A549 (cell line): ENCODE measurements at regions of chr22 and their contacts with region 1.

Region 1: DNA sequence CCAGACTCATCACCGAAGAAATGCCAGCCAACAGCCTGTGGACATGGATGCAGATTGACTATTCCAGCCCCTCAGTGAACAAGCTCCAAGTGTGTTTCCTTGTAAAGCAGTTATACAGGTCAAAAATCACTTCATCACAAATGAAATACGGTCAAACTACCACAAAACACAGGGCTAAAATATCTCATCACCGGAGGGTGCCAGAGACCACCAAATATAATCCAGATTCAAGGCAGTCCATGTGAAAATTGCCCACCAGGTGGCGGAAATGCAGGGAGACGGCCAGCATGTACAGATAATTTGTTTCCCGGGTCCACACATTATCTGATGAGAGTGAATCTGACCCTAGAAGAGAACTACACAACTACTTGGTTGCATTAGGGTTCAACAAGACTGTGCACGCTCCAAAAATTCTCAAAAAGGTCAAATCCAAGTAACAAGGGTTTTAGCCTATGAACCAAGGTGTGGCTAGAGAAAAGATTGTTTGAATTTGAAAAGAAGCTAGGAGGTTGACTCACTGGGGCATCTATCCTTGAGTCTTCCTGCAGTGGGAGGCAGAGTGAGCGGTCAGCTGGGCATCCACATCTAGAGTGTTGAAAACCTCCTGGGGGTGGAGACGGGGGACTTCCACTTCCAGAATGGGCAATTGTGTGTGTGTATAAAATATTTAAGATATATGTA is 71.7 kb downstream of the IGLL5 start:
- DNase-seq: peak; percentile 40 to 66
- ATAC-seq: peak; percentile 71 to 84
- H3K4me3 ChIP-seq: no peak overlapping the region
- H3K27ac ChIP-seq: no peak overlapping the region
- H3K4me1 ChIP-seq: no peaks in the 10 kb centered on the region
- CTCF ChIP-seq: peak; percentile 93
- EP300 ChIP-seq: no peak
- POLR2A ChIP-seq: no peak
- RAD21 ChIP-seq: peak; percentile 90

Region 2: GRCh38 chr22:22591348-22592299 is 367.7 kb before region 1 on chr22:
- CTCF ChIA-PET with region 1: interaction called, 44 read pairs
- POLR2A ChIA-PET with region 1: no interaction called
- DNase-seq: peak in 1 of 2 experiments; percentile 4
- ATAC-seq: peak; percentile 58 to 63; a peak in 2 of 6 replicates
- H3K4me3 ChIP-seq: no peak overlapping the region
- H3K27ac ChIP-seq: no peak overlapping the region
- H3K4me1 ChIP-seq: no peaks in the 10 kb centered on the region
- CTCF ChIP-seq: no peak
- EP300 ChIP-seq: no peak
- POLR2A ChIP-seq: no peak
- RAD21 ChIP-seq: no peak

Region 3: DNA sequence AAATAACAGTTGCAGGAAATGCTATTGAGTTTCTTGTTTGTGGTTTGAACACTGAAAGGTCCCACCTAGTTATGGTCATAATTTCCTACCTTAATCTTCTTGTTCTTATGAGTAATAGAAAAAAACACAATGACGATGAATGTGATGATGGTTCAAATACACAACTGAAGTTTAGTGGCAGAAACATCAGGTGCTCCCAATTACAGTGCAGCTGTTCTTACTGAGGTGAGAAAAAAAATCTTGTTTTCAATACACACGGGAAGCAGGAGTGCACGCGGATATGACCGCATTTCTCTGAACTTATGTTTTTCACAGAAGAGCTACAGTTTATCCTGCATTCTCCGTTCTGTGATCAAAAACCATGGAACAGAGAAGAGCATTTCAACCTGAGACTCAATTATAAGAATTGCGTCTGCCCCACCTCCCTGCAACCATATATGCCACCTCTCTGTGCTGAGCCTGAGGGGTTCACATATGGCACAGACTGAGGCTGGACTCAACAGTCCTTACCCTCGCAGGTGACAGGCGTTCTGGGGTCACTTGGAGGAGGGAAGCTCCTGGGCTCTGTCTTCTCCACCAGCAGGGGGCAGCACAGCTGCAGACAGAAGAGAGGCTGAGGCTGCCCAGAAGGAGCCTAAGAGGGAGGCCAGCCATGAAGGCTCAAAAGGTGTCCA is 171.4 kb before region 1 on chr22:
- CTCF ChIA-PET with region 1: interaction called, 64 read pairs
- POLR2A ChIA-PET with region 1: no interaction called
- DNase-seq: peak; percentile 39 to 52
- ATAC-seq: peak; percentile 80 to 95; a peak in 5 of 6 replicates
- H3K4me3 ChIP-seq: no peak overlapping the region
- H3K27ac ChIP-seq: no peak overlapping the region
- H3K4me1 ChIP-seq: no peaks in the 10 kb centered on the region
- CTCF ChIP-seq: peak; percentile 58; the same call in 2 of the 3 replicates
- EP300 ChIP-seq: no peak
- POLR2A ChIP-seq: no peak
- RAD21 ChIP-seq: peak; percentile 30 to 46; a peak in 4 of 5 replicates

Region 4: GRCh38 chr22:22928666-22929380 is 30.5 kb before region 1 on chr22:
- CTCF ChIA-PET with region 1: interaction called, 22 read pairs
- POLR2A ChIA-PET with region 1: no interaction called
- DNase-seq: no peak
- ATAC-seq: peak in 1 of 2 experiments; percentile 57; a peak in 3 of 6 replicates
- H3K4me3 ChIP-seq: no peak overlapping the region
- H3K27ac ChIP-seq: no peak overlapping the region
- H3K4me1 ChIP-seq: no peaks in the 10 kb centered on the region
- CTCF ChIP-seq: no peak
- EP300 ChIP-seq: no peak
- POLR2A ChIP-seq: no peak
- RAD21 ChIP-seq: no peak

Region 5: GRCh38 chr22:23106906-23107367 is 147.7 kb after region 1 on chr22:
- CTCF ChIA-PET with region 1: interaction called, 19 read pairs
- POLR2A ChIA-PET with region 1: no interaction called
- DNase-seq: no peak
- ATAC-seq: no peak
- H3K4me3 ChIP-seq: no peak overlapping the region
- H3K27ac ChIP-seq: no peak overlapping the region
- H3K4me1 ChIP-seq: no peaks in the 10 kb centered on the region
- CTCF ChIP-seq: no peak
- EP300 ChIP-seq: no peak
- POLR2A ChIP-seq: no peak
- RAD21 ChIP-seq: no peak

Region 6: DNA sequence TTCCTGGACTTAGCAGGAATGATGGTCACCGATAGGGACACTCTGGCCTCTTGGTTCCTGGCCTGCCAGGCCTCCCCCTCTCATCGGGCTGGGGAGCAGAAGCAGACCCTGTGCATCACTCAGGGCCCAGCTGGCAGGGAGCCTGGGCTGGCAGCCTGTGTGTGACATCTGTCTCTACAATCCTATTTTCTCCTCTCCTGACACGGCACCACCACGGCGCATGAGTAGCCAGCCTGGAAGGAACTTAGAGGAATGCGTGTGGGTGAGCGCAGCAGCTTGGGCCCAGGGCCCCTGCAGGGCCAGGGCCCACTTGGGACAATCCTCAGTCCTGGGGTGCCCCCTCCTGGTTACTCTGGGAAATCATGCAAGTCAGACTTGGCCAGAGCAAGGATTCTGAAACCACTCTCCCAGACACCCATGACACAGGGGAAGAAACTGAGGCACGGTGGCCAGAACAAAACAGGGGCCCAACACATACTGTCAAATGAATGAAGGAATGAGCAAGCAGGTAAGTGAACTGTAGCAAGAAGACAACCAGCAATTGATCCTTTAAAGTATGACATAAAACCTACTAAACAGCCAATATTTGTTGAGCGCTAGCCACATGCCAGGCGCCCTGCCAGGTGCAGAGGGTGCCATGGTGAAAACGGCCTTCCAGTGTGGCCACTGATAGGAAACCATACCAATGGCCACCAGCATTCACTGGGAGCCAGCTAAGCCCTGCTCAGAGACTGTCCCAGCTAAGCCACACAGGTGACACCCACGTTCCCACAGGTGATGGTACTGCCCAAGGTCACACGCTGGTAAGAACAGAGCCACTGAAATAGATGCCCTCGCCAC is 169.2 kb after region 1 on chr22:
- CTCF ChIA-PET with region 1: interaction called, 314 read pairs
- POLR2A ChIA-PET with region 1: no interaction called
- DNase-seq: peak; percentile 58
- ATAC-seq: peak; percentile 75 to 93; a peak in 5 of 6 replicates
- H3K4me3 ChIP-seq: no peak overlapping the region
- H3K27ac ChIP-seq: no peak overlapping the region
- H3K4me1 ChIP-seq: no peaks in the 10 kb centered on the region
- CTCF ChIP-seq: peak; percentile 79
- EP300 ChIP-seq: no peak
- POLR2A ChIP-seq: no peak
- RAD21 ChIP-seq: peak; percentile 83 to 90